K562 (cell line): ENCODE measurements at regions of chr2 and their contacts with region 1.

Region 1: DNA sequence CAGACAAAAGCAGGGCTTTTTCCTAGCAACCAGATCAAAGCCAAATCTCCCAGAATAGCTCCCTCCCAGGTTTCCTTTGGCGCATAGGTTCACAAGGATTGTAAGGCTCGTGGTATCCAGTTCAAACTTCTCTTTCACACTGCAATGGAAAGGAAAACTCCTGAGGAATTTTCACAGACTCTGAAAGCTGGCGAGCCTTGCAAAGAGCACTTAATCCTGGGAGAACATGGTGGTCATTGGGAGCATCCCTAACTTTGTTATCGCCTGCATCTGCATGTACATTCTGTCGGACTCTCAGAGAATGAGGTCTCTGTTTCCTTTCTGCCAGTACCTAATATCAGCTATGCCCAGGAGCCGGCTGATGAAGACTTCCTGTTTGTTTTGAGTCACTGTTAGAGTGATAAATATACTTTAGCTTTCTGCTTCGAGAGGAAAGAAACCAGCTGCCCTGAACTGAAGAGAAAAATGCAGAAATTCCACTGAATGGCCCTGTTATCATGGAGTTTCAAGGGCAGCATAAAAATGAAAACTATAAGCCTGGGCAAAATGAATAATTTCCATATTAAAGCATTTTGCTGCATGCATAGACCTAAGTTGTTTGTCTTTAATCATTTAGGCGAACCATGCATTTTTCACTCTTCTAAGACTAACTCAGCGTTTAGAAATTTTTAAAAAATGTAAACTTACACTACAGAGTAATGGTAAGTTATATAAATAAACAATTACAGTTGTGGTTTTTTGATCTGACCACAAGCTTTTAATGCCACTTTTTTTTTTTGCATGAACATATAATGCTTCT is 76.4 kb upstream of the ZEB2 start:
- DNase-seq: peak in 2 of 4 experiments; percentile 70 to 84
- ATAC-seq: peak; percentile 88
- H3K4me3 ChIP-seq: peak overlapping the region; percentile 1; the same call in 1 of the 2 replicates
- H3K27ac ChIP-seq: peak overlapping the region; percentile 83
- H3K4me1 ChIP-seq: peaks cover 7 to 25% of the 10 kb centered on the region in 2 experiments; a peak in 4 of 5 replicates
- H3K27me3 ChIP-seq: no peaks in the 10 kb centered on the region
- CTCF ChIP-seq: no peak
- EP300 ChIP-seq: peak; percentile 92
- POLR2A ChIP-seq: no peak
- RAD21 ChIP-seq: peak in 1 of 2 experiments; percentile 23; a peak in 2 of 4 replicates

Region 2: DNA sequence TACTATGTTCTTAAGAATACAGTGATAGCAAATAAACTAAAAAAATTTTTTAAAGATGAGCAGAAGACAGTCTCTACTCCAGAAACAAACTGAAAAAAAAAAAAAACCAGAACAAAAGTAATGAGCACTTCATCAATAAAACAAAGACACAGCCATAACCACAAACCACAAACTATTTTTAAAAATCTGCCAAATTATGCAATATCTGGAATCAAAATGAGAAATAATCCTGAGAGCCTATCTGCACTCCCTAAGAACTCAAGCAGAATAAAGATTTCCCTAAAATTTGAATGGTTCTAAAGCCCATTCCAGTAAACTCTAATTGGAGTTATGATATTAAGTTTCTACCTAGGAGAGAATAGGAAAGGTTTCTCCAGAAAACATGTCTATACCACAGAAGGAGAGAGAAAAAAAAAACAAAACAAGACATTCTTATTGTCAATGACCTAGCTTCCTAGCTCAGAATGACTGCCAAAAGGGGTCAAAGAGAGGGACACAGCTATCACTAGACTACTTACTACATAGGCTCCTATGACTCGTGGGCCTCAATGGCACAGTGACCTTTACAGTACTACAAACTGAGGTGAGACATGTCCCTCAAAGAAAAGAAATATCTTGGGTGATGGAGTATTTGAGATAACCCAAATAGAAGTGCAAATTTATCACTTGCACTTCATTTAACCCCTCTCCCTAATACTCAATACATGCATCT is 339.1 kb before region 1 on chr2:
- CTCF ChIA-PET with region 1: no interaction called
- POLR2A ChIA-PET with region 1: no interaction called
- in situ Hi-C with region 1: no loop called
- intact Hi-C with region 1: no loop called
- DNase-seq: no peak
- ATAC-seq: no peak
- H3K4me3 ChIP-seq: no peak overlapping the region
- H3K27ac ChIP-seq: no peak overlapping the region
- H3K4me1 ChIP-seq: no peaks in the 10 kb centered on the region
- H3K27me3 ChIP-seq: no peaks in the 10 kb centered on the region
- CTCF ChIP-seq: no peak
- EP300 ChIP-seq: no peak
- POLR2A ChIP-seq: no peak
- RAD21 ChIP-seq: no peak

Region 3: GRCh38 chr2:144526831-144527230 is 69.4 kb before region 1 on chr2:
- CTCF ChIA-PET with region 1: no interaction called
- POLR2A ChIA-PET with region 1: no interaction called
- in situ Hi-C with region 1: no loop called
- intact Hi-C with region 1: no loop called
- DNase-seq: no peak
- ATAC-seq: no peak
- H3K4me3 ChIP-seq: no peak overlapping the region
- H3K27ac ChIP-seq: no peak overlapping the region
- H3K4me1 ChIP-seq: peaks cover 9 to 11% of the 10 kb centered on the region in 2 experiments
- H3K27me3 ChIP-seq: no peaks in the 10 kb centered on the region
- CTCF ChIP-seq: no peak
- EP300 ChIP-seq: no peak
- POLR2A ChIP-seq: no peak
- RAD21 ChIP-seq: no peak

Region 4: GRCh38 chr2:144682248-144682647 is 86.0 kb after region 1 on chr2:
- CTCF ChIA-PET with region 1: no interaction called
- POLR2A ChIA-PET with region 1: no interaction called
- in situ Hi-C with region 1: no loop called
- intact Hi-C with region 1: loop called (anchors 5 kb)
- DNase-seq: peak; percentile 30 to 87 (median 60)
- ATAC-seq: peak; percentile 99
- H3K4me3 ChIP-seq: no peak overlapping the region
- H3K27ac ChIP-seq: peak overlapping the region; percentile 55; the same call in 2 of the 3 replicates
- H3K4me1 ChIP-seq: peaks cover 0 to 23% of the 10 kb centered on the region in 2 experiments; a peak in 3 of 5 replicates
- H3K27me3 ChIP-seq: no peaks in the 10 kb centered on the region
- CTCF ChIP-seq: no peak; a peak in 1 of 6 replicates
- EP300 ChIP-seq: no peak
- POLR2A ChIP-seq: no peak
- RAD21 ChIP-seq: peak in 1 of 2 experiments; percentile 5; a peak in 1 of 4 replicates